ENCODE measurements at regions of chr5 and their contacts with region 1.

Region 1: DNA sequence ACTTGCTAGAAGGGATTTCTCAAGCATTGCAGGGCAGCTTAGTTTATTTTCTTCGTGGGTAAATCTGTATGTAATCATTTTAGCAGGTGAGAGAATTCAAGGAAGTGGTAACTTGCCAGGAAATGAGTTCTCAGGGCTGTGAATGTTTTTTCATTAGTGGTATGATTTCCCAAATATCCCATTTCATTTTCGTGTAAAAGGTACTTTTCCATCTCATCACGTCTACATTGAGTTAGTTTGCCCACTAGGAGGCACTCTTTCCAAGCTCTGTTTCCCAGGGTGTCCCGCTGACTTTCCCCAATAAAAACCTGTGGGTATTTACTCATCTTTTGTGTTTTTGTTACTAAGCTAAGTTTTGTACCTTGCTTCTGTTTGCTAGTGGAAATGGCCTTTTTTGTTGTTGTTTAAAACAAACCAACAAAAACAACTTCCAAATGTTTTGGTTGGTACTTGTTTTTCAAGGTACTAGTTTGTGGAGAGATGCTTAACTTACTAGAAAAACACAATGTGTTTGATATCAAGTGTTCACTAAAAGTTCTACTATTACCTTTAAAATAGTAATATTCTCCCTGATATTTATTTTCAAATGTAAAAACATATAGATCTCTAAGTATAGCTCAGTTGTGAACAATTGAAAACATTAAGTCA is 373.6 kb downstream of the ADGRV1 start:
- DNase-seq: no peak
- H3K4me3 ChIP-seq: no peak overlapping the region
- H3K27me3 ChIP-seq: no peaks in the 10 kb centered on the region
- CTCF ChIP-seq: peak; percentile 84

Region 2: GRCh38 chr5:91074615-91075014 is 142.4 kb after region 1 on chr5:
- CTCF ChIA-PET with region 1: interaction called, 10 read pairs
- POLR2A ChIA-PET with region 1: no interaction called
- DNase-seq: peak; percentile 80
- H3K4me3 ChIP-seq: no peak overlapping the region
- H3K27me3 ChIP-seq: no peaks in the 10 kb centered on the region
- CTCF ChIP-seq: peak; percentile 45

Region 3: GRCh38 chr5:91090995-91091394 is 158.8 kb after region 1 on chr5:
- CTCF ChIA-PET with region 1: interaction called, 11 read pairs
- POLR2A ChIA-PET with region 1: no interaction called
- DNase-seq: no peak
- H3K4me3 ChIP-seq: no peak overlapping the region
- H3K27me3 ChIP-seq: no peaks in the 10 kb centered on the region
- CTCF ChIP-seq: no peak

Measured in BJ (cell line).